Activated T-helper 1 cell treated with anti-CD3 and anti-CD28 coated beads, Interleukin-12 subunit alpha, Interleukin-12 subunit beta, Interleukin-2, Interleukin-4 antibody, amounts not matched to agents 30 ng/mL and 10 ng/mL and 1 ng/mL, durations not matched to agents 14 hours and 24 hours and 36 hours (primary cell): ENCODE measurements at regions of chr6 and their contacts with region 1.

Region 1: GRCh38 chr6:80541181-80541580 is 434.7 kb downstream of the BCKDHB start:
- DNase-seq: peak; percentile 8
- H3K4me3 Mint-ChIP-seq: no peak overlapping the region
- H3K27ac Mint-ChIP-seq: peak overlapping the region; percentile 35
- H3K4me1 Mint-ChIP-seq: peaks cover 44% of the 10 kb centered on the region
- H3K27me3 Mint-ChIP-seq: no peaks in the 10 kb centered on the region

Region 2: DNA sequence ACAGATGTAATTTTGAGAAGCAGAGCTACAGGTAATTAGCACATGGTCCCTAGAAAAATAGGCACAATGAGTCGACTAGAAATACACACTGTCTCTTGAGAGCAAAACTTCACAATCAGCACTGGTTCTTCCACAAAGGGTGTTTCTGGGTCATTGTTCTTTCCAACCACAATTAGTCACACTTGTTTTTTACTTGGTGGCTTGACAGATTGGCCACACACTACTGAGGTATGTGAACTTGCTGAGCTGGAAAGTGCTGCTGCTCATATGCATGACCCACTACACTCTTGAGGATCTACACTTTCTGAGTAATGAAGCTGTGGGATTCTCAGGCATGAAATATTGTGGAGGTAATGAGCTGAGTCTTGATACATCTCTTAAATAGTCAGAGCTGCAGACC is 87.0 kb before region 1 on chr6:
- intact Hi-C with region 1: loop called (anchors 2 kb)
- DNase-seq: no peak
- H3K4me3 Mint-ChIP-seq: no peak overlapping the region
- H3K27ac Mint-ChIP-seq: peak overlapping the region; percentile 59
- H3K4me1 Mint-ChIP-seq: no peaks in the 10 kb centered on the region
- H3K27me3 Mint-ChIP-seq: no peaks in the 10 kb centered on the region

Region 3: GRCh38 chr6:80523531-80523997 is 17.6 kb before region 1 on chr6:
- intact Hi-C with region 1: loop called (anchors 2 kb)
- DNase-seq: no peak
- H3K4me3 Mint-ChIP-seq: peak overlapping the region; percentile 12
- H3K27ac Mint-ChIP-seq: peak overlapping the region; percentile 91
- H3K4me1 Mint-ChIP-seq: peaks cover 14% of the 10 kb centered on the region
- H3K27me3 Mint-ChIP-seq: peaks cover 2% of the 10 kb centered on the region

Region 4: GRCh38 chr6:80553071-80553740 is 12.0 kb after region 1 on chr6:
- intact Hi-C with region 1: no loop called
- DNase-seq: no peak
- H3K4me3 Mint-ChIP-seq: no peak overlapping the region
- H3K27ac Mint-ChIP-seq: no peak overlapping the region
- H3K4me1 Mint-ChIP-seq: peaks cover under 1% of the 10 kb centered on the region
- H3K27me3 Mint-ChIP-seq: peaks cover 7% of the 10 kb centered on the region